Activated CD4-positive, alpha-beta memory T cell treated with anti-CD3 and anti-CD28 coated beads for 36 hours (primary cell): ENCODE measurements at regions of chr19 and their contacts with region 1.

Region 1: DNA sequence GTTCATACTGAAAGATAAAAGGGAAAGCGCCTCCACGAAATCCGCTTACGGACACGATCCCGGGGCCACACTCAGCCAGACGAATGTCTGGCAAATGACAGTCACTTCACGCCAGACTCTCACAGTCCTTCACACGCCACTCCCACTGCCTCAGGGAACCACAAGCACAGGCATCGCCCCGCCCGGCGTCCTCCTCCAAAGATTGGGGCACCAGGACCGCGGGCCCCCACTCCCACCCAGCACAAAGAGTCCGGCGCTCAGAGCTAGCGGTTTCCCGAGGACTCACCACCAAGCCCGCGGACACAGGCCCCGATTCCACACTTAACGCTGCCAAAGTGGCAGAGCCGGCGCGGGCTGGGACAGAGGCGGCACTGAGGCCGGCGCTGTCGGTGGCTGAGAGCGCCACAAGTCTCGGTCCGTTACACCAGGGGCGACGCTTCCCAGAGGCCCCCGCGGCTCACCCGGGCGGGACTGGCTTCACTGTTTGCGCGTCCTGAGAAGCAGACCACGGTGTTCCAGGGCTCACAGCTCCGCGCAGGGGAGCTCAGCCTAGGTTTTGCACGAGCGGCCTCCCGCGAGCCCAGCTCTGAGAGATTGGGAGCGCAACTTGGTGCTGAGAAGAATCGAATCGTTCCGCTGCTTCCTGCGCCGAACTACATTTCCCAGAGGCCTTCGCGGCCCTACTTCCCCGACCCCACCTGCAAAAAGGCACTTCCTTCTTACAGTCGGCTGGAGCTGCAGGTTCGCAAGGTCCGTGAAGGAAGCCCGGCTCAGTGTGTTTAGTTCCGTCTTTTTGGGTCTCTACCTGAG is at the start of gene ZNF569:
- DNase-seq: peak; percentile 93
- H3K4me3 Mint-ChIP-seq: peak within 1 kb of the TSS; percentile 92
- H3K27ac Mint-ChIP-seq: peak within 1 kb of the TSS; percentile 94
- H3K4me1 Mint-ChIP-seq: peaks cover 29% of the 10 kb centered on the region
- H3K27me3 Mint-ChIP-seq: no peaks in the 10 kb centered on the region
- total RNA-seq, gene ZNF569: 5.3 to 7.2 TPM

Region 2: GRCh38 chr19:36772311-36773222 is 694.4 kb before region 1 on chr19 and contains the start of gene ZNF850:
- CTCF ChIA-PET with region 1: no interaction called
- POLR2A ChIA-PET with region 1: no interaction called
- intact Hi-C with region 1: loop called (anchors 5 kb)
- DNase-seq: peak; percentile 95
- H3K4me3 Mint-ChIP-seq: peak within 1 kb of the TSS; percentile 91
- H3K27ac Mint-ChIP-seq: peak within 1 kb of the TSS; percentile 83
- H3K4me1 Mint-ChIP-seq: peaks cover 21% of the 10 kb centered on the region
- H3K27me3 Mint-ChIP-seq: no peaks in the 10 kb centered on the region
- total RNA-seq, gene ZNF850: 6.7 TPM

Region 3: GRCh38 chr19:36973021-36973843 is 493.8 kb before region 1 on chr19:
- CTCF ChIA-PET with region 1: interaction called, 3 read pairs
- POLR2A ChIA-PET with region 1: no interaction called
- intact Hi-C with region 1: loop called (anchors 1 kb)
- DNase-seq: peak; percentile 91
- H3K4me3 Mint-ChIP-seq: peak overlapping the region; percentile 89
- H3K27ac Mint-ChIP-seq: peak overlapping the region; percentile 95
- H3K4me1 Mint-ChIP-seq: peaks cover 7% of the 10 kb centered on the region
- H3K27me3 Mint-ChIP-seq: no peaks in the 10 kb centered on the region

Region 4: DNA sequence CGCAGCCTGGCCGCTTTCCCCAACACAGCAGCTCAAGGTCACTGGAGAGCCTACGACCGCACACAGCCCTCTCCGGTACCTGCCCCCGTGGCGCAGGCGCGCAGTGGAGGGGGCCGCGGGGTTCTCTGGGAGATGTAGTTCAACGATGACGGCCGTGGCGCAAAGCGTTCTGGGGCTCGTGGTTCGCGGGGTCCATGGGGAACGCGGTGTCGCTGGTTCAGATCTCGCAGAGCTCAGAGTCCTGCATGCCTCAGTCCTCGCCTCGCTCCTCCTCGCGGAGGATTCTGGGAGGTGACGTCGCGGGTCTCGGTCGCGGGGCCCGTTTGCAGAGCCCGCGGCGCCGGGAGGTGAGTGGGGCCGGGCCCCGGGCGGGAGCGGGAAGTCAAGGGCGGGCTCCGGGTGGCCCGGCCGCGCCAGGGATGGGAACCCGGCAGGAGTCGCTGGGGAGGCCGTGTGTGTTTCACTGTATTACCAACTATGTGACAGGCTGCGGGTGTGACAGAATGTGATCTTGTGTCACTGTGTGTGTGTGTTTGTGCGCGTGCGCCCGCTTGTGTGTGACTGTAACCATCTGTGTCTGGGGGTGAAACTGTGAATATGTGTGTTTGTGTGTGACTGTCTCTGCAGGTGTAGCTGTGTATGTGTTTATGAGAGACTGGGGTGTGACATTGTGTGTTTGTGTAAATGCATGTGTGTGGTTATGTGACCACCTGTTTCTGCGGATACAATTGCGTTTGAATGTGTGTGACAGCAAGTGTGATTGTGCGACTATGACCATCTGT is 95.9 kb before region 1 on chr19 and contains the start of gene ZNF527:
- CTCF ChIA-PET with region 1: no interaction called
- POLR2A ChIA-PET with region 1: interaction called, 3 read pairs
- intact Hi-C with region 1: loop called (anchors 1 kb)
- DNase-seq: peak; percentile 98
- H3K4me3 Mint-ChIP-seq: peak within 1 kb of the TSS; percentile 93
- H3K27ac Mint-ChIP-seq: peak within 1 kb of the TSS; percentile 88
- H3K4me1 Mint-ChIP-seq: peaks cover 11% of the 10 kb centered on the region
- H3K27me3 Mint-ChIP-seq: no peaks in the 10 kb centered on the region
- total RNA-seq, gene ZNF527: 3.8 to 4.4 TPM

Region 5: GRCh38 chr19:37563518-37563917 is 96.5 kb after region 1 on chr19:
- CTCF ChIA-PET with region 1: no interaction called
- POLR2A ChIA-PET with region 1: no interaction called
- intact Hi-C with region 1: no loop called
- DNase-seq: no peak
- H3K4me3 Mint-ChIP-seq: no peak overlapping the region
- H3K27ac Mint-ChIP-seq: no peak overlapping the region
- H3K4me1 Mint-ChIP-seq: no peaks in the 10 kb centered on the region
- H3K27me3 Mint-ChIP-seq: no peaks in the 10 kb centered on the region

Region 6: DNA sequence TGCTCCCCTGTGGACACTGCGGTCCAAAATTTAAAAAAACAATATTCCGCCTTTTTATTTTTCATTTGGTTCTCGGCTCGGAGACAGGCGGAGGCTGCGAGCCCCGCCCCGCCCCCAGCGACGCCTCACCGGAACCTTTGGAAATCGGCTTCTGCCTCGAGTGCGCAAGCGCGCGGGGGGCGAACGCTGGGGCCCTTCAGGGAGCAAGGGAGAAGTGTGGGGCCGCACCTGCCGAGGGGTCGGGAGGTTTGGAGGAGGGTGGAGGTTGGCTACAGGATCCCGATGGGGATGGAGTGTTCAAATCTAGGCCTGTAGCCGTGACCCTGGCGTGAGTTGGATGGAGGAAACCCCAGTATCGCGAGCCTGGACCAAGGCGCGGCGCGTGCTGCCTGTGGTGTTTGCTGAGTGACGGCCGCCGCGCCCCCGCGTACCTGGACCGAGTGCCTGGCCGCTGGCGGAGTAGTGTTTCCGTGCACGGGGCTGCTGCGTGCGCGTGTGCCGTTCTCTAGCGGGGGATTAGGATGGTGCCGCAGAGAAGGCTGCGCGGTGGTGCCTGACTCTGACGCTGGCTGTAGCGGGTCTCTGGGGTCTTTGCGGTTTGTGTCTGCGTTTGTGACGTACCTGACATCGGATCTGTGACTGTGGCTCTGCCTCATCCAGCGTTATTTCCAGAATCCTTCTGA is 188.8 kb after region 1 on chr19:
- CTCF ChIA-PET with region 1: no interaction called
- POLR2A ChIA-PET with region 1: no interaction called
- intact Hi-C with region 1: loop called (anchors 5 kb)
- DNase-seq: peak; percentile 90
- H3K4me3 Mint-ChIP-seq: peak overlapping the region; percentile 91
- H3K27ac Mint-ChIP-seq: peak overlapping the region; percentile 95
- H3K4me1 Mint-ChIP-seq: peaks cover 27% of the 10 kb centered on the region
- H3K27me3 Mint-ChIP-seq: no peaks in the 10 kb centered on the region